Activated T-helper 1 cell treated with anti-CD3 and anti-CD28 coated beads, Interleukin-12 subunit alpha, Interleukin-12 subunit beta, Interleukin-2, Interleukin-4 antibody, amounts not matched to agents 30 ng/mL and 10 ng/mL and 1 ng/mL, durations not matched to agents 14 hours and 24 hours and 36 hours (primary cell): ENCODE measurements at regions of chr15 and their contacts with region 1.

Region 1: GRCh38 chr15:60899322-60899966 is 329.7 kb downstream of the RORA start:
- DNase-seq: peak; percentile 43
- H3K4me3 Mint-ChIP-seq: peak overlapping the region; percentile 40
- H3K27ac Mint-ChIP-seq: peak overlapping the region; percentile 88
- H3K4me1 Mint-ChIP-seq: peaks cover 70% of the 10 kb centered on the region
- H3K27me3 Mint-ChIP-seq: no peaks in the 10 kb centered on the region

Region 2: DNA sequence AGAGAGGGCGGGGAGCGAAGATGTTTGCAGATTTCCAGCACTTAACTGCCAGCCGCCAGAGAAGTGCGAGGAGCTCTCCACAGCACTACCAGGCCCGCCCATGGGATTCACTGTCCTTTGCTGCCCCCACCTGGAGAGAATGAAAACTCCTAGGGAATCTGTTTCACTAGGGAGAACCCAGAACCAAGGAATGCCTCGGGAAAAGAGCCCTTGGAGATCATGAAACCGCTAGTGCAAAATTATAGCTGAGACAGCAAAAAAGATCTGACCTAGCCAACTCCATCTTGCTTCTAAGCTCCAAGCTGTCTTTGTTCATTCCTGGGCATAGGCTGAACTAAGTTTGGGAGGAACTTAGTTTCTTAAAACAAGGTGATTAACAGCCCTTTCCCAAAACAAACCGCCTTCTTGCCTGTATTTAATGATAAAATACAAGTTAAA is 1370.5 kb before region 1 on chr15:
- intact Hi-C with region 1: no loop called
- DNase-seq: peak; percentile 56
- H3K4me3 Mint-ChIP-seq: no peak overlapping the region
- H3K27ac Mint-ChIP-seq: no peak overlapping the region
- H3K4me1 Mint-ChIP-seq: peaks cover 21% of the 10 kb centered on the region
- H3K27me3 Mint-ChIP-seq: peaks cover 7% of the 10 kb centered on the region

Region 3: GRCh38 chr15:60507596-60508424 is 391.6 kb before region 1 on chr15:
- intact Hi-C with region 1: loop called (anchors 5 kb)
- DNase-seq: peak; percentile 51
- H3K4me3 Mint-ChIP-seq: no peak overlapping the region
- H3K27ac Mint-ChIP-seq: peak overlapping the region; percentile 65
- H3K4me1 Mint-ChIP-seq: peaks cover 58% of the 10 kb centered on the region
- H3K27me3 Mint-ChIP-seq: no peaks in the 10 kb centered on the region

Region 4: GRCh38 chr15:60592371-60593169 is 306.9 kb before region 1 on chr15:
- intact Hi-C with region 1: loop called (anchors 1 kb)
- DNase-seq: peak; percentile 84
- H3K4me3 Mint-ChIP-seq: peak overlapping the region; percentile 83
- H3K27ac Mint-ChIP-seq: peak overlapping the region; percentile 68
- H3K4me1 Mint-ChIP-seq: peaks cover 69% of the 10 kb centered on the region
- H3K27me3 Mint-ChIP-seq: peaks cover 2% of the 10 kb centered on the region

Region 5: DNA sequence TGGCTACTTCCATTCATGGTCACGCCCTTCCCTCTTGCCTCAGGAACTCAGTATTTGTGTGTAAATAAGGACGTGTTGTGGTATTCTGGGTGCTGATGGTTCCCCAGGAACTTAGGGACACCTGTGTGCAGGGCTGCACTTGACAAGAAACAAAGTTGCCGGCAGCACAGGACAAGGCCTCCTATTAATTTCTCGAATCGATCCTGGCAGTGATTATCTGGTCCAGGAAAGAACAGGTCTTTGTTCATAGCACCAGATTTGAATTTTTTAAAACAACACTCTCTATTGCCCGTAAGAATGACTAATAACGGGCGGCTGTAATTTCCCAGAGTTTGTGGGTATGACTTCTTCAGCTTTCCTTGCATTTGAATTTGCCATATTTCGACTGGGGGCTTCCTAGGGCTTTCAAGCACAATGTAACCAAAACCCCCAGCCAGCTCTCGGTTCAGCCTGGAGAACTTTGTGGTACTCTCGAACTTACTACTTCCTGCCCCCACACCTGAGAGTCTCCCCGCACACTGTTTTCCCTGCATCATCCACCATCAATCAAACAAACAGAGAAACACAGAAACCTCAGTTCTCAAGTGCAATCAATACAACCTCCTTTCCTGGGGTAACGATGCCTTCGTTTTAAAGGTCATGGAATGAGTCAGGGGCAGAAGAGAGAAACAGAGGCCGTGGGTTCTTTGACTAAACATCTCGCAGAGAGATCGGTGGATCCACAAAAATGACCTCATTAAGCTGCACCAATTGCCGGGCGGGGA is 178.8 kb before region 1 on chr15:
- intact Hi-C with region 1: loop called (anchors 1 kb)
- DNase-seq: peak; percentile 56
- H3K4me3 Mint-ChIP-seq: peak overlapping the region; percentile 59
- H3K27ac Mint-ChIP-seq: peak overlapping the region; percentile 88
- H3K4me1 Mint-ChIP-seq: peaks cover 80% of the 10 kb centered on the region
- H3K27me3 Mint-ChIP-seq: no peaks in the 10 kb centered on the region

Region 6: GRCh38 chr15:60804986-60805949 is 94.2 kb before region 1 on chr15:
- intact Hi-C with region 1: loop called (anchors 1 kb)
- DNase-seq: no peak
- H3K4me3 Mint-ChIP-seq: no peak overlapping the region
- H3K27ac Mint-ChIP-seq: no peak overlapping the region
- H3K4me1 Mint-ChIP-seq: peaks cover 67% of the 10 kb centered on the region
- H3K27me3 Mint-ChIP-seq: no peaks in the 10 kb centered on the region

Region 7: DNA sequence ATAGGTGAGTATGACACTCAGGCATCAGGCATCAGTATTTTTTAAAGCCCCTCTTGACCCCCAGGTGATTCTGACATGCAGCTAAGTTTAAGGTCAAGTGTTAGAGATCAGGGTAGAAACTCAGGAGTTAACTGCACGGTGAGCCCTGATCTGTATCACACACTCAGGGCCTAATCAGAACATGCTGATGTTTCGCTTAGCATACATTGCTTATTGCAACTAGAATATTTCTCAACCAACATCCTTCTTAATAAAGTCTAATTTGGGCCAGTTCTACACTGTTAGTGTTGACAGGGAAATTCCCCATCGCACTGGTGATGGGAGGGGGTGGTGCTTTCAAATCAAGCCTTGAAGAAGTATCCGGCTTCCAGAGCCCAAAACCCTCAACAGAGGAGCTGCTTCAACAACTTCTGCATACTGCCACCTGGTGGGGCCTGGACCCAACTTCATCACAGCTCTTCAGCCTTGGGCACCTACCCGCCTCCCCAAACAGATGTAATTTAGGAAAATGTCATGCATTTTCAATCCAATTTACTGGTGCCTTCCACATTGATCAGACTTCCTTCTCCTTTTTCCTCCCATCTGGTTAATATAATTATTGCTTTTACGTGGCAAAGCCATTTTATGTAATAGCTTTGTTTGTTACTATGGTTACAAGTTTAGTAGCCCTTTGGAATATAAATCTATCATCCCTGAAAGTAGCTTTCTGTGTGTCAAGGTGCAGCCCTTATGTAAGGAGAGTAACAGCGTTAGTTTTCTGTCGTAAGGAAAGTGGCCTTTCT is 17.4 kb after region 1 on chr15:
- intact Hi-C with region 1: loop called (anchors 1 kb)
- DNase-seq: peak; percentile 80
- H3K4me3 Mint-ChIP-seq: peak overlapping the region; percentile 17
- H3K27ac Mint-ChIP-seq: peak overlapping the region; percentile 64
- H3K4me1 Mint-ChIP-seq: peaks cover 32% of the 10 kb centered on the region
- H3K27me3 Mint-ChIP-seq: peaks cover 2% of the 10 kb centered on the region

Region 8: GRCh38 chr15:61809216-61809615 is 909.8 kb after region 1 on chr15:
- intact Hi-C with region 1: no loop called
- DNase-seq: no peak
- H3K4me3 Mint-ChIP-seq: no peak overlapping the region
- H3K27ac Mint-ChIP-seq: no peak overlapping the region
- H3K4me1 Mint-ChIP-seq: no peaks in the 10 kb centered on the region
- H3K27me3 Mint-ChIP-seq: no peaks in the 10 kb centered on the region